ENCODE measurements at regions of chr2 and their contacts with region 1.

Region 1: DNA sequence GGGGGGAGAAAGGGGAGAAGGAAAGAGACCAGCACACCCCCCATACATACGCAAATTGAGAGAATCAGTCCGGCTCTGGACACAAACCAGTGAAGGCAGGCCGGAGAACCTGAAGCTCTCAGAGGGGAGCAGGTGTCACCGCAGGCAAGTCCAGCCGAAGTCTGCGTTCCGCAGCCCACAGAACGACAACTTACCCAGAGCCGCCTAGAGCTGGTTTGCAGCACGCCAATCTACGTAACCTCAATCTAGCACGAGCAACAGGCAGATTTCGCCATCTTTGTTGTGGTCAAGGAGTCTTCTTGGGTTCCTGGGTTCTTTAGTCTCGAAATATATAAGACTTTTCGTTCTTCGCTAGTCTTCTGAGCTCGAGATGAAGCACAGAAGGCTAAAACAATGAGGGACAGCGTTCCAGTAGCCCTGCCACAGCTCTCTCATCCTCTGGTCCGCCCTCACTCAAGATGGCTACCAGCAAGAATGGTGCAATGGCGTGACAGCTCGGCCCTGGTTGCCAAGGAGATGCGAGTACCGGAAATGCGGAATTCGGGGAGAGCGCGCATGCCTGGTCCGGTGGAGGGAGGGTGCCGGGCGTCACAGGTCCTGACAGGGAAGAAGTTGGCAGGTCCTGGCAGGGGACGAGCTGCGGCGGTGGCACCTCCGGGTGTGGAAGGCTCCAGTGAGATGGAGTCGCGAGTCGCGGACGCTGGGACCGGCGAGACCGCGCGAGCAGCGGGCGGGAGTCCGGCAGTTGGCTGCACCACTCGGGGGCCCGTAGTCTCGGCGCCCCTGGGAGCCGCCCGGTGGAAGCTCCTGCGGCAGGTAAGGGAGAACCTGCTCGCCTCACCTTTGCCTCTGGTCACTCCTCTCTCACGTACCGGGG is at the starts of genes CAMKMT and PREPL:
- DNase-seq: peak; percentile 96

Region 2: GRCh38 chr2:44267796-44268648 is 93.5 kb before region 1 on chr2:
- CTCF ChIA-PET with region 1: no interaction called
- POLR2A ChIA-PET with region 1: no interaction called
- DNase-seq: no peak

Region 3: GRCh38 chr2:44351088-44351487 is 10.5 kb before region 1 on chr2:
- CTCF ChIA-PET with region 1: no interaction called
- POLR2A ChIA-PET with region 1: interaction called, 13 read pairs
- DNase-seq: no peak

Measured in HEK293T (cell line).